ENCODE measurements at regions of chr19 and their contacts with region 1.

Region 1: DNA sequence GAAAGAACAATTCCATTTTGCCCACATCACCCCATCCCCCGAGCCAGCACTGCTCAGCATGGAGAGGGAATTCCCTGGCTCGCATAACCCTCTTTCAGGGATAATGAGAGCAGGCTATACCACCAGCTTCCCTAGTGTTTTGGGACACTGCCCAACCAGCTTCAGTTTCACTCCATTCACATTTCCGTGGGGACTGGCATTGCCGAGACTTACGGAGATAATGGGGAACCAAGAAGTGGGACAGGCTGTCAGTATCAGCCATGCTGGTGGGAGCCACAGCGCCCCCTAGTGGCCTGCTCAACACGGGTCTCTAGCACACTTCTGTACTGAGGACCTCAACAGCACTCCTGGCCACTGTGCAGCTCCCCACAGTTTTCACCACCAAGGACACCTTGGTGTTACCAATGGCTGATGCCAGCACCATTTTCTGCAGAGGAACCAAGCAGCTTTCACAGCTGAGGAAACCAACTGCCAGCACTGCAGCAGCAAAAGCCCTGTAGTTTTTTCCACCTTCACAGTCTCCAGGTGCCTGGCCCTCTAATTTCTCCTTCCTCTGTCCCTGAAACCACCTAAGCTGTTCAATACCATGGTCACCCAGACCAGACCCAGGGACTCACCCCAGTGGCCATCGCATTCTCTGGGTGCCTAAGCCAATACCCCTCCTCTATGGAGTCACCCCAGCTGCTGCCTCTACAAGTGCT is 23.7 kb downstream of the SLC6A16 start:
- DNase-seq: peak; percentile 89
- ATAC-seq: peak; percentile 98
- H3K4me3 ChIP-seq: peak overlapping the region in 4 of 5 experiments; percentile 11 to 51 (median 37)
- H3K4me3 Mint-ChIP-seq: peak overlapping the region; percentile 66
- H3K27ac ChIP-seq: no peak overlapping the region
- H3K27ac Mint-ChIP-seq: peak overlapping the region; percentile 20
- H3K4me1 ChIP-seq: peaks cover 10 to 14% of the 10 kb centered on the region in 2 donors
- H3K4me1 Mint-ChIP-seq: peaks cover 24% of the 10 kb centered on the region
- H3K27me3 ChIP-seq: no peaks in the 10 kb centered on the region
- H3K27me3 Mint-ChIP-seq: no peaks in the 10 kb centered on the region
- CTCF ChIP-seq: peak; percentile 90

Region 2: GRCh38 chr19:49064768-49065611 is 236.3 kb before region 1 on chr19 and contains the start of gene NTF4:
- CTCF ChIA-PET with region 1: no interaction called
- POLR2A ChIA-PET with region 1: no interaction called
- intact Hi-C with region 1: no loop called
- DNase-seq: no peak
- ATAC-seq: no peak
- H3K4me3 ChIP-seq: no peak within 1 kb of the TSS
- H3K4me3 Mint-ChIP-seq: no peak within 1 kb of the TSS
- H3K27ac ChIP-seq: no peak within 1 kb of the TSS
- H3K27ac Mint-ChIP-seq: no peak within 1 kb of the TSS
- H3K4me1 ChIP-seq: peaks cover 0 to 5% of the 10 kb centered on the region in 2 donors
- H3K4me1 Mint-ChIP-seq: peaks cover 4% of the 10 kb centered on the region
- H3K27me3 ChIP-seq: peaks cover 0 to 58% (median 23%) of the 10 kb centered on the region in 4 experiments
- H3K27me3 Mint-ChIP-seq: peaks cover 51% of the 10 kb centered on the region
- CTCF ChIP-seq: no peak
- total RNA-seq, gene NTF4: not detected in 2 replicates

Region 3: GRCh38 chr19:49224856-49225255 is 76.5 kb before region 1 on chr19:
- CTCF ChIA-PET with region 1: interaction called, 10 read pairs
- POLR2A ChIA-PET with region 1: no interaction called
- intact Hi-C with region 1: no loop called
- DNase-seq: peak; percentile 44
- ATAC-seq: no peak
- H3K4me3 ChIP-seq: no peak overlapping the region
- H3K4me3 Mint-ChIP-seq: no peak overlapping the region
- H3K27ac ChIP-seq: no peak overlapping the region
- H3K27ac Mint-ChIP-seq: no peak overlapping the region
- H3K4me1 ChIP-seq: peaks cover 0 to 8% of the 10 kb centered on the region in 2 donors
- H3K4me1 Mint-ChIP-seq: peaks cover 8% of the 10 kb centered on the region
- H3K27me3 ChIP-seq: no peaks in the 10 kb centered on the region
- H3K27me3 Mint-ChIP-seq: peaks cover 7% of the 10 kb centered on the region
- CTCF ChIP-seq: peak; percentile 23

Region 4: DNA sequence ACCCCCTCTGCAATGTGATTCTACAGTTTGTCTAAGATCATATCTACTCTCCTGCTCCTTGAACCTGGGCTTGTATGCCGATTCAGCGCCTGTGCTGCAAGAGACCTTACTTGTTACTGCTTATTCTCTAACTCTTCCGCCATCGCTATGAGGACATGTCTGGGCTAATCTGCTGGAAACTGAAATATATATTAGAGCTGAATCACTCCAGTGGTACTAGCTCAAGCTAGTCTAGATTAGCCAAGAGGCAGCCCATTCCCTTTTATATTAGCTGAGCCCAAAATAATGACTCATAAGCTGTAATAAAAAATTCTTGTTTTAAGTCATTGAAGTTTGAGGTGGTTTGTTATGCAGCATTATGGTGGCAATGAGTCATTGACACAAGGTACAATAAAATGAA is 29.1 kb before region 1 on chr19:
- CTCF ChIA-PET with region 1: interaction called, 12 read pairs
- POLR2A ChIA-PET with region 1: no interaction called
- intact Hi-C with region 1: no loop called
- DNase-seq: no peak
- ATAC-seq: no peak
- H3K4me3 ChIP-seq: no peak overlapping the region
- H3K4me3 Mint-ChIP-seq: no peak overlapping the region
- H3K27ac ChIP-seq: no peak overlapping the region
- H3K27ac Mint-ChIP-seq: no peak overlapping the region
- H3K4me1 ChIP-seq: no peaks in the 10 kb centered on the region
- H3K4me1 Mint-ChIP-seq: no peaks in the 10 kb centered on the region
- H3K27me3 ChIP-seq: no peaks in the 10 kb centered on the region
- H3K27me3 Mint-ChIP-seq: peaks cover 13% of the 10 kb centered on the region
- CTCF ChIP-seq: no peak

Region 5: DNA sequence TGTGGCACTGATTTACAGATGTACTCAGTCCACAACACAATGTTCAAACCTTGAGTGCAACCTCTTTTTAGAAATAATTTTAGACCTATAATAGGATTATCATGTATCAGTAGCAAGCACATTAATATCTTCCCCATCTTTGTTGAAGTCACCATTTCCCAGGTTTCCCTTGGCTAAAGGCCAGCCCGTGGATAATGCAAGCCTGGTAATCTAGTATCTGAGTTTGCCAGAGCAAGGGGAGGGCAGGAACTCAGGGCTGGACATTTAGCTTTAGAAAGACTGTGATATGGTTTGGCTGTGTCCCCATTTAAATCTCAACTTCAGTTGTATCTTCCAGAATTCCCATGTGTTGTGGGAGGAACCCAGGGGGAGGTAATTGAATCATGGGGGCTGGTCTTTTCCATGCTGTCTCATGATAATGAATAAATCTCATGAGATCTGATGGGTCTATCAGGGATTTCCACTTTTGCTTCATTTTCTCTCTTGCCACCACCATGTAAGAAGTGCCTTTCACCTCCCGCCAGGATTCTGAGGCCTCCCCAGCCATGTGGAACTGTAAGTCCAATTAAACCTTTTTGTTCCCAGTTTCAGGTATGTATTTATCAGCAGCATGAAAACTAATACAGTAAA is 14.1 kb before region 1 on chr19:
- CTCF ChIA-PET with region 1: interaction called, 15 read pairs
- POLR2A ChIA-PET with region 1: interaction called, 6 read pairs
- intact Hi-C with region 1: no loop called
- DNase-seq: no peak
- ATAC-seq: no peak
- H3K4me3 ChIP-seq: no peak overlapping the region
- H3K4me3 Mint-ChIP-seq: no peak overlapping the region
- H3K27ac ChIP-seq: no peak overlapping the region
- H3K27ac Mint-ChIP-seq: peak overlapping the region; percentile 53
- H3K4me1 ChIP-seq: no peaks in the 10 kb centered on the region
- H3K4me1 Mint-ChIP-seq: peaks cover 3% of the 10 kb centered on the region
- H3K27me3 ChIP-seq: peaks cover 0 to 2% (median 0%) of the 10 kb centered on the region in 4 experiments
- H3K27me3 Mint-ChIP-seq: peaks cover 4% of the 10 kb centered on the region
- CTCF ChIP-seq: no peak

Region 6: GRCh38 chr19:49331616-49332055 is 30.3 kb after region 1 on chr19:
- CTCF ChIA-PET with region 1: interaction called, 51 read pairs
- POLR2A ChIA-PET with region 1: interaction called, 26 read pairs
- intact Hi-C with region 1: loop called (anchors 2 kb)
- DNase-seq: peak; percentile 83
- ATAC-seq: peak; percentile 29
- H3K4me3 ChIP-seq: peak overlapping the region in 1 of 5 experiments; percentile 35
- H3K4me3 Mint-ChIP-seq: peak overlapping the region; percentile 65
- H3K27ac ChIP-seq: peak overlapping the region; percentile 93 to 98
- H3K27ac Mint-ChIP-seq: peak overlapping the region; percentile 99
- H3K4me1 ChIP-seq: peaks cover 79 to 89% of the 10 kb centered on the region in 2 donors
- H3K4me1 Mint-ChIP-seq: peaks cover 82% of the 10 kb centered on the region
- H3K27me3 ChIP-seq: no peaks in the 10 kb centered on the region
- H3K27me3 Mint-ChIP-seq: no peaks in the 10 kb centered on the region
- CTCF ChIP-seq: no peak

Region 7: GRCh38 chr19:49473868-49474544 is 172.7 kb after region 1 on chr19 and contains the start of gene FLT3LG:
- CTCF ChIA-PET with region 1: interaction called, 24 read pairs
- POLR2A ChIA-PET with region 1: no interaction called
- intact Hi-C with region 1: no loop called
- DNase-seq: peak; percentile 94
- ATAC-seq: peak; percentile 52
- H3K4me3 ChIP-seq: peak within 1 kb of the TSS in 4 of 5 experiments; percentile 53 to 98 (median 70)
- H3K4me3 Mint-ChIP-seq: peak within 1 kb of the TSS; percentile 93
- H3K27ac ChIP-seq: peak within 1 kb of the TSS; percentile 75 to 81
- H3K27ac Mint-ChIP-seq: peak within 1 kb of the TSS; percentile 97
- H3K4me1 ChIP-seq: peaks cover 43 to 73% of the 10 kb centered on the region in 2 donors
- H3K4me1 Mint-ChIP-seq: peaks cover 57% of the 10 kb centered on the region
- H3K27me3 ChIP-seq: no peaks in the 10 kb centered on the region
- H3K27me3 Mint-ChIP-seq: no peaks in the 10 kb centered on the region
- CTCF ChIP-seq: peak; percentile 89
- total RNA-seq, gene FLT3LG: 27.8 and 31.0 TPM in 2 replicates

Region 8: GRCh38 chr19:49614096-49614833 is 312.9 kb after region 1 on chr19:
- CTCF ChIA-PET with region 1: no interaction called
- POLR2A ChIA-PET with region 1: no interaction called
- intact Hi-C with region 1: no loop called
- DNase-seq: no peak
- ATAC-seq: no peak
- H3K4me3 ChIP-seq: no peak overlapping the region
- H3K4me3 Mint-ChIP-seq: peak overlapping the region; percentile 32
- H3K27ac ChIP-seq: no peak overlapping the region
- H3K27ac Mint-ChIP-seq: peak overlapping the region; percentile 70
- H3K4me1 ChIP-seq: no peaks in the 10 kb centered on the region
- H3K4me1 Mint-ChIP-seq: peaks cover 9% of the 10 kb centered on the region
- H3K27me3 ChIP-seq: no peaks in the 10 kb centered on the region
- H3K27me3 Mint-ChIP-seq: no peaks in the 10 kb centered on the region
- CTCF ChIP-seq: no peak